Activated CD4-positive, alpha-beta memory T cell treated with anti-CD3 and anti-CD28 coated beads for 36 hours (primary cell): ENCODE measurements at regions of chr3 and their contacts with region 1.

Region 1: DNA sequence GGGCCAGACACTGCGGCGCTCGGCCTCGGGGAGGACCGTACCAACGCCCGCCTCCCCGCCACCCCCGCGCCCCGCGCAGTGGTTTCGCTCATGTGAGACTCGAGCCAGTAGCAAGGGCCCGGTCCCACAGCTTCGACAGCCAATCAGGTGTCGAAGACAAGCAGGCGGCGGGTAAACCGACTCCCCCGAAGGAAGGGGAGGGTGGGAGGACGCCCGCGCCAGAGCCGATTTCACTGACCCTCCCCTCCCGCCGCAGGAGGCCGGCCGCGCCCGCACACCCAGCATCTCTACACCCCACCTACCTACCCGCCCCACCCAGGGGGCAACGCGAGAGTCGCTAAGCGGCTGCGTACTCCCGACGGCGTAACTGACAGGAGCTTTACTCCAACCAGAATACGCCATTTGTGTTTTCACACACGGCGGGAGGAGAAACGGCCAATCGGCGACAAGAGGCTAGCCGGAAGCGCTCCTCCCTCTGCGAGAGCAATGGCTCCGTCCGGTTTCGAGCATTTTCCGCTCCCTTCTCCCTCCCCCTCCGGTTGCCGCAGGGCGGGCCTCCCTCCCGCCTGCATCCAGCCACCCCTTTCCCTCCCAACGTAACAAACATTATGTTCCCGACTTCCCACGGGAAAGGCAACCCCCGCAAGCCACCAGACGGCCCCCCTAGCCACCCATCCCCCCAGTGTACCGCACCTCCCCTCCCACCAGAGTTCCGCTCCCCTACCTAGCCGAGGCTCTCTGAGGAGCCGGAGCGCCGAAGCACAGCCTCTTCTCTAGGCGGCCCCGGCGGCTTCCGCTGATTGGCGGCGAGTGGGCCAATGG is 504 bp upstream of the SETD5 start:
- DNase-seq: peak; percentile 98
- H3K4me3 Mint-ChIP-seq: peak overlapping the region; percentile 94
- H3K27ac Mint-ChIP-seq: peak overlapping the region; percentile 99
- H3K4me1 Mint-ChIP-seq: peaks cover 63% of the 10 kb centered on the region
- H3K27me3 Mint-ChIP-seq: no peaks in the 10 kb centered on the region

Region 2: GRCh38 chr3:9102240-9102981 is 294.5 kb before region 1 on chr3:
- CTCF ChIA-PET with region 1: no interaction called
- POLR2A ChIA-PET with region 1: no interaction called
- intact Hi-C with region 1: no loop called
- DNase-seq: no peak
- H3K4me3 Mint-ChIP-seq: no peak overlapping the region
- H3K27ac Mint-ChIP-seq: no peak overlapping the region
- H3K4me1 Mint-ChIP-seq: no peaks in the 10 kb centered on the region
- H3K27me3 Mint-ChIP-seq: no peaks in the 10 kb centered on the region

Region 3: GRCh38 chr3:9330166-9330703 is 66.7 kb before region 1 on chr3:
- CTCF ChIA-PET with region 1: no interaction called
- POLR2A ChIA-PET with region 1: no interaction called
- intact Hi-C with region 1: no loop called
- DNase-seq: no peak
- H3K4me3 Mint-ChIP-seq: no peak overlapping the region
- H3K27ac Mint-ChIP-seq: no peak overlapping the region
- H3K4me1 Mint-ChIP-seq: no peaks in the 10 kb centered on the region
- H3K27me3 Mint-ChIP-seq: peaks cover 1% of the 10 kb centered on the region

Region 4: GRCh38 chr3:9362731-9363530 is 34.0 kb before region 1 on chr3 and contains the start of gene THUMPD3:
- CTCF ChIA-PET with region 1: interaction called, 3 read pairs
- POLR2A ChIA-PET with region 1: interaction called, 72 read pairs
- intact Hi-C with region 1: loop called (anchors 1 kb)
- DNase-seq: peak; percentile 96
- H3K4me3 Mint-ChIP-seq: peak within 1 kb of the TSS; percentile 95
- H3K27ac Mint-ChIP-seq: peak within 1 kb of the TSS; percentile 98
- H3K4me1 Mint-ChIP-seq: peaks cover 21% of the 10 kb centered on the region
- H3K27me3 Mint-ChIP-seq: no peaks in the 10 kb centered on the region
- total RNA-seq, gene THUMPD3: 55.8 to 60.6 TPM

Region 5: DNA sequence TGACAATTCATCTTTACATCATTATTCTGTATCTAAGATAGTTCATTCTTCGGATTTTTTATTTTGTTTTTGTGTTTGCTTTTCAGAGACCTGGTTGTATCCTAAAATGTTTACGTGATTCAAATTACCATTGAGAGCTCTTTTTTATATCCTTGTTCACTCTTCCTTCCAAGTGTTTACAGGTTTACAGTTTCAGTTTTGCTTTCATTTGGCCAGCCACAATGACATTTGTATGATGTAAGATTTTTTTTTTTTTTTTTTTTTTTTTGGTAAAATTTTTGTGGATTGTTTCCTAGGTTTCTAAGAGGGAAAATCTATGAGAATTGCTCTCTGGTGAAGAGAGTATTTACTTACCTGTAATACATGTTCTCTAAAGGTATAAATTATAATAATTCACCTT is 55.5 kb after region 1 on chr3:
- CTCF ChIA-PET with region 1: no interaction called
- POLR2A ChIA-PET with region 1: interaction called, 3 read pairs
- intact Hi-C with region 1: loop called (anchors 1 kb)
- DNase-seq: no peak
- H3K4me3 Mint-ChIP-seq: no peak overlapping the region
- H3K27ac Mint-ChIP-seq: peak overlapping the region; percentile 87
- H3K4me1 Mint-ChIP-seq: peaks cover 38% of the 10 kb centered on the region
- H3K27me3 Mint-ChIP-seq: no peaks in the 10 kb centered on the region

Region 6: DNA sequence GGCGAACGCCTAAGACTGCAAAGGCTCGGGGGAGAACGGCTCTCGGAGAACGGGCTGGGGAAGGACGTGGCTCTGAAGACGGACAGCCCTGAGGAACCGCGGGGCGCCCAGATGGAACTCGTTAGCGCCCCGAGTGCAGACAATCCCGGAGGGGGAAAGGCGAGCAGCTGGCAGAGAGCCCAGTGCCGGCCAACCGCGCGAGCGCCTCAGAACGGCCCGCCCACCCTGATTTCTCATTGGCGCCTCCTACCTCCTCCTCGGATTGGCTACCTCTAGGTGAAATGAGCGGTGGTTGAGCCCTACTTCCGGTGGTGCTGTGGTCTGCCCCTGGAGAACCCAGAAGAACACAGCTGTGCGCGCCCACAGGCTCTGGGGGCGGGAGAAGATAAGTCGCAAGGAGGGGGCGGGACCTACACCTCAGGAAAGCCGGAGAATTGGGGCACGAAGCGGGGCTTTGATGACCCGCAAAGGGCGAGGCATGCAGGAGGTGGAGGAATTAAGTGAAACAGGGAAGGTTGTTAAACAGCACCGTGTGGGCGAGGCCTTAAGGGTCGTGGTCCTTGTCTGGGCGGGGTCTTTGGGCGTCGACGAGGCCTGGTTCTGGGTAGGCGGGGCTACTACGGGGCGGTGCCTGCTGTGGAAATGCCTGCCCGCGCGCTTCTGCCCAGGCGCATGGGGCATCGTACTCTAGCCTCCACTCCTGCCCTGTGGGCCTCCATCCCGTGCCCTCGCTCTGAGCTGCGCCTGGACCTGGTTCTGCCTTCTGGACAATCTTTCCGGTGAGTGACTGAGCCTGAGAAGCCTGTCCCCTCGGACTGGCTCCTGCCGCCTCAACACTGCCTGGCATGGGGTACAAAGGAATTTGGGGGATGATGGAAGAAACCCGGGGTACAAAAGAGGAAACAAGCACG is 353.0 kb after region 1 on chr3 and contains the start of gene OGG1:
- CTCF ChIA-PET with region 1: no interaction called
- POLR2A ChIA-PET with region 1: no interaction called
- intact Hi-C with region 1: loop called (anchors 5 kb)
- DNase-seq: peak; percentile 98
- H3K4me3 Mint-ChIP-seq: peak within 1 kb of the TSS; percentile 96
- H3K27ac Mint-ChIP-seq: peak within 1 kb of the TSS; percentile 88
- H3K4me1 Mint-ChIP-seq: peaks cover 50% of the 10 kb centered on the region
- H3K27me3 Mint-ChIP-seq: no peaks in the 10 kb centered on the region
- total RNA-seq, gene OGG1: 35.7 to 36.5 TPM

Region 7: DNA sequence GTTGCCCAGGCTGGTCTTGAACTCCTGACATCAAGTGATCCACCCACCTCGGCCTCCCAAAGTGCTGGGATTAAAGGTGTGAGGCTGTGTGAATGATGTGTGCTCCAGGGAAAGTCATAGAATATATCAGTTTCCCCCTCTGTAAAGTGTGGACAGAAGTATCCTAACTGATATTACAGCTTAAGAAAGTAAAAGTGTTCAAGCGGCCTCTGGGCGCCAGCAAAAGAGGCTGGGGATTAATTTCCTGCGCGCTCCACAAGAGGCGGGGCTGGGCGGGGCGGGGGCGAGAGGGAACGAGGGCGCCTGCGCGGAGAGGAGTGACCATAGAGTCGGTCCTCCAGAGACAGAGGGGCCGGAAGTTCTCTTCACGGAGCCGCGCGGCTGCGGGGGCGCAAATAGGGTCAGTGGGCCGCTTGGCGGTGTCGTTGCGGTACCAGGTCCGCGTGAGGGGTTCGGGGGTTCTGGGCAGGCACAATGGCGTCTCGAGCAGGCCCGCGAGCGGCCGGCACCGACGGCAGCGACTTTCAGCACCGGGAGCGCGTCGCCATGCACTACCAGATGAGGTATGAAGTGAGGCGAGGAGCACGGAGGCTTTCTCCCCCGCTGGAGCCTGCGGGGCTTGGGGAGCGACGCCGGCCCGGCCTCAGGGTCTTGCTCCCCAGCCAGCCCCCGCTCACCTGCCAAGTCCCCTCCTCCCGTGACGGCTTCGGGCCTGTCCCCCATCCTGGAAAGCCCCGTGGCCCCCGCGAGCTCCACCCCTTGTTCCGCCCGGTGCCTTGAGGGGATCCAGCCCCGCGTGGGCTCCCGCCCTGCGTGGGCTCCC is 493.5 kb after region 1 on chr3 and contains the start of gene JAGN1:
- CTCF ChIA-PET with region 1: no interaction called
- POLR2A ChIA-PET with region 1: no interaction called
- intact Hi-C with region 1: loop called (anchors 10 kb)
- DNase-seq: peak; percentile 96
- H3K4me3 Mint-ChIP-seq: peak within 1 kb of the TSS; percentile 99
- H3K27ac Mint-ChIP-seq: peak within 1 kb of the TSS; percentile 99
- H3K4me1 Mint-ChIP-seq: peaks cover 31% of the 10 kb centered on the region
- H3K27me3 Mint-ChIP-seq: no peaks in the 10 kb centered on the region
- total RNA-seq, gene JAGN1: 25.0 to 27.8 TPM

Region 8: DNA sequence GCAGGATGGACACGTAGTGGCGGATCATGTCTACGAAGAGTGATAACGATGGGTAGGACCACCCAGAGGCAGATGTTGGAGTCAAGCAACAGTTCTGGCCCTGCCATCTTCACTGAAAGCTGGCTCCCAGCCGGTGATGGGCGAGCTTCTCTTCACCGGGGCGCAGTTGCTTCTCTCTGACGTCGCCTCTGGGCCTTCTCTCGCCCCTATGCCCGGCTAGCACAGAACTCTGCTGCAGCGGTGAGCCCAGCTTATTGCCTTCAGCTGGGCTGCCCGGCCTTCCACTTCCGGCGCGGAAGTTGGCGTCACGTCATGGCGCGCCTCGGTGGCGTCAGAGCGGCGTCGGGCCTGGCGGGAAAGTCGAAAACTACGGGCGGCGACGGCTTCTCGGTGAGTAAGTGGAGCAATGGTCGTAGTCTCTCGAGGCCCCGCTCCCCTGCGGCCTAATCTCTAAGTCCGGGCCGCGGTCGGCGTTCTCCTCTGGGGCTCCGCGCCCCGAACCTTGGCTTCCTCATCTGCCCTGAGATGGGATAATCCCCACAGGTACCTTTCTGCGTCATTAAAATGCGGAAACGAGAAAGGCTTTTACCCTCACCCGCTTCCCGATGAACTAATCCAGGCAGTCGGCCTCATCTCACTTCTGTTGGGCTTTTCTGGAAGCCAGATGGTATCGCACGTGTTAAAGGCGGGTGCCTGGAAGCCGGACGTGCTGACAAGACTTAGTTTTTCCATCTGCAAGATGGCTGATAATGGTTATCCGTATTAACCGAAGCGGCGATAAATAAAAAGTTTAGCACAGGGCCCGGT is 629.4 kb after region 1 on chr3 and contains the start of gene FANCD2:
- CTCF ChIA-PET with region 1: no interaction called
- POLR2A ChIA-PET with region 1: no interaction called
- intact Hi-C with region 1: loop called (anchors 2 kb)
- DNase-seq: peak; percentile 96
- H3K4me3 Mint-ChIP-seq: peak within 1 kb of the TSS; percentile 97
- H3K27ac Mint-ChIP-seq: peak within 1 kb of the TSS; percentile 98
- H3K4me1 Mint-ChIP-seq: peaks cover 24% of the 10 kb centered on the region
- H3K27me3 Mint-ChIP-seq: no peaks in the 10 kb centered on the region
- total RNA-seq, gene FANCD2: 83.9 to 89.4 TPM